ENCODE measurements at regions of chr2 and their contacts with region 1.

Region 1: DNA sequence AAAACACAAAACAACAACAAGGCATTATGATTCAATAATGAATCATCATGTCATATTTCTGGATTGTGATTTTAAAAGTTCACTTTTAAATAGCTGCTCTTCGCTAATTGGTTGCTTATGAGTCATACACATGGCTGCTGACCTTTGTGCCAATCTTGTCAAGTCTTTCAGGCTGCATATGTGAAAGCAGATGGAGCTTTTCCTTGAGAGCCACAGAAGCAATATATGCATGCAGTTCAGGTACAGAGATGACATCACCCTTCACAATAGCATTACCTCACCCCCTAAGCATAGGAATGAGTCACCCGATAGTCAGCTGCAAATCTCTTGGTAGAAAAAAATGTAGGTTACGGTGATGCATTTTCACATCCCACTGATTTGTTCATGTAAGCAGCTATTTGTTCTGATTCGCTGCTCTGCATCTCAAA is 27.2 kb downstream of the EIF2AK3 start:
- DNase-seq: peak; percentile 51
- H3K4me3 Mint-ChIP-seq: no peak overlapping the region
- H3K27ac Mint-ChIP-seq: peak overlapping the region; percentile 56
- H3K4me1 Mint-ChIP-seq: peaks cover 33% of the 10 kb centered on the region
- H3K27me3 Mint-ChIP-seq: no peaks in the 10 kb centered on the region

Region 2: GRCh38 chr2:88614497-88615157 is 14.6 kb after region 1 on chr2:
- intact Hi-C with region 1: loop called (anchors 2 kb)
- DNase-seq: no peak
- H3K4me3 Mint-ChIP-seq: no peak overlapping the region
- H3K27ac Mint-ChIP-seq: no peak overlapping the region
- H3K4me1 Mint-ChIP-seq: peaks cover 15% of the 10 kb centered on the region
- H3K27me3 Mint-ChIP-seq: no peaks in the 10 kb centered on the region

Region 3: DNA sequence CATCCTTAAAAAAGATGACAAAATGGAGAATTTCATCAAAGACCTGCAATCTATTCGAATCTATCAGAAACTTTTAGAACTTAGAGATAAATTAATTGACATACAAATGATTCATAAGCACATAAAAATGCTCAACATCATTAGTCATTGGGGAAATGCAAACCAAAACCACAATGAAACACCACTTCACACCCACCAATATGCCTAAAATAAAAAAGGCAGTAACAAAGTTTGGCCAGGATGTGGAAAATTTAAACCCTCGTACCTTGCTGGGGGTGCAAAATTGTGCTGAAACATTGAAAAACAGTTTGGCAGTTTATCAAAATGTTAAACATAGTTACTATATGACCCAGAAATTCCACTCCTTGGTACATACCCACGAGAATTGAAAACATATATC is 38.7 kb after region 1 on chr2:
- intact Hi-C with region 1: loop called (anchors 1 kb)
- DNase-seq: no peak
- H3K4me3 Mint-ChIP-seq: no peak overlapping the region
- H3K27ac Mint-ChIP-seq: peak overlapping the region; percentile 84
- H3K4me1 Mint-ChIP-seq: peaks cover 49% of the 10 kb centered on the region
- H3K27me3 Mint-ChIP-seq: no peaks in the 10 kb centered on the region

Region 4: DNA sequence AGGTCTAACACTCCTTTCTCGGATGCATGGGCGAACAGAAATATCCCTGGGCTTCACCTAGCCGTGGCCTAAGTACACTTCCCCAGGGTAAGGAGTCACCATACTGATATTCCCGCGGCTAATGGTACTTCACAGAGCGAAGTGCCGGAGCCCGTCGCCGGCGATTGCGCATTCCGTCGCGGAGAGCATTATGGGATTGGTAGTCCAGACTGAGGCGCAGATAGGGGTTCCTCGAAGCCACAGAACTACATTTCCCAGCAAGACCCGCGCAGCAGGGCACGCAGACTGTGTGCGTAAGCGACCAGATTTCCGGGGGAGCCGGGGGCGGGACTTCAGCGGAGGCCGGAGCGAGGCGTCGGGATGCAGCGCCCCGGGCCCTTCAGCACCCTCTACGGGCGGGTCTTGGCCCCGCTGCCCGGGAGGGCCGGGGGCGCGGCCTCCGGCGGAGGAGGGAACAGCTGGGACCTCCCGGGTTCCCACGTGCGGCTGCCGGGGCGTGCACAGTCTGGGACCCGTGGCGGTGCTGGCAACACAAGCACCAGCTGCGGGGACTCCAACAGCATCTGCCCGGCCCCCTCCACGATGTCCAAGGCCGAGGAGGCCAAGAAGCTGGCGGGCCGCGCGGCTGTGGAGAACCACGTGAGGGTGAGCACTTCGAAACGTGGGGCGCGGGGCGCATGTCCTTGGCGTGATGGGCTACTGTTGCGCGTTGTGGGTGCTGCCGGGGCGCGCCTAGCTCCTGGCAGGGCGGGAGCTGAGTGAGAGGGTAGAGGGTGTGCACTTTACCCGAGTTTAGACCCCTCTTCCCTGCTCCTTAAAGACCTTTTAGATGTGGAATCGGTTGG is 91.5 kb after region 1 on chr2 and contains the start of gene RPIA:
- intact Hi-C with region 1: loop called (anchors 1 kb)
- DNase-seq: peak; percentile 98
- H3K4me3 Mint-ChIP-seq: peak within 1 kb of the TSS; percentile 86
- H3K27ac Mint-ChIP-seq: peak within 1 kb of the TSS; percentile 92
- H3K4me1 Mint-ChIP-seq: peaks cover 28% of the 10 kb centered on the region
- H3K27me3 Mint-ChIP-seq: no peaks in the 10 kb centered on the region
- total RNA-seq, gene RPIA: 67.1 and 68.4 TPM in 2 replicates